OCI-LY7 (cell line): ENCODE measurements at regions of chr1 and their contacts with region 1.

Region 1: DNA sequence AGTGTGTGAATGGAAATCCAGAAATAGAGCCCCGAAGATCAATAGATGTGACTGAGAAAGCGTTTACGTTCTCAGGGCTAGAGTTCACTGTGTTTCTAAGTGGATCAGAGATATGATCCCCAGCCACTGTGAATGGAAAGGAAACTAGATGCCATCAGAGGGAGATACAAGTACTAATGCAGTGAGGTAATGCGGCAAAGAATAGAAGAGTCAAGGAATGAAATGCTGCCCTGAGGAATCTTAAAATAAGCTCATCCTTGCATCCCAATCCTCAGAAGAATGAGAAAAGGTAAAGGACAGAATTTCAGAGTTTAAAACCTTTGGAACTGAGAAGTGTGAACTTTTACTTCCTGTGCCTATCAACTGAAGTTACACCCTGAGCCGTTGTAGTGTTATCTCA is 165.5 kb upstream of the ESRRG start:
- DNase-seq: no peak
- H3K4me3 ChIP-seq: no peak overlapping the region
- H3K27ac ChIP-seq: no peak overlapping the region
- H3K4me1 ChIP-seq: no peaks in the 10 kb centered on the region
- CTCF ChIP-seq: no peak

Region 2: DNA sequence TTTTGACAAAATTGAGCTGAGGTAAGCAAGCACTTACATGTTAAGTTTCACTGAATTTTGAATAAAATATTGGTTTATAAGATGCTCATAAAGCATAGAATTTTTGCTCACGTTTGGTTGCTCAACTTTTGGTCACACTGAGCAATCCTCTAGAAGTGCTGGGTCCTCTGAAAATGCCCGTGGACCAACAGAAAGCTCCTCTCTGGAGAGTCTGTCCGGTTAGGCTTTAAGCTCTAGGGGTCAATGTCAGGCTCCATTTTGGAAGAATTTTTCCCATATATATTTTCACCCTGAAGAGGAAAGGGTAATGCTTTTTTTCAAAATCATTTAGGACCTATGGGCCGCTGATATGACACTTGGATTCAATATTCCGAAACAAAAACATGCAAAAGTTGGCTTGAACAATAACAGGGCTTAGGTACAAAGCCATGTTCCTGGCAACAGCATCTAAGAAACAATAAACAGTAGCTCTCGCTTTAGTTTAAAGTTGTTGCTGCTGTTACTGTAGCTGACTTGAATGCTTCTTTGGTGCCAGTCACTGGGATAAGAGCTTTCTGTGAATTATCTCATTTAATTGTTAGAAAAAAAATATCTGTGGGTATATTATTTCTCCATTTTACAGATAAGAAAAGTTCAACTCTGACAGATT is 33.8 kb before region 1 on chr1:
- CTCF ChIA-PET with region 1: no interaction called
- POLR2A ChIA-PET with region 1: interaction called, 10 read pairs
- intact Hi-C with region 1: no loop called
- DNase-seq: no peak
- H3K4me3 ChIP-seq: no peak overlapping the region
- H3K27ac ChIP-seq: no peak overlapping the region
- H3K4me1 ChIP-seq: no peaks in the 10 kb centered on the region
- CTCF ChIP-seq: no peak